ENCODE measurements at regions of chr9 and their contacts with region 1.

Region 1: DNA sequence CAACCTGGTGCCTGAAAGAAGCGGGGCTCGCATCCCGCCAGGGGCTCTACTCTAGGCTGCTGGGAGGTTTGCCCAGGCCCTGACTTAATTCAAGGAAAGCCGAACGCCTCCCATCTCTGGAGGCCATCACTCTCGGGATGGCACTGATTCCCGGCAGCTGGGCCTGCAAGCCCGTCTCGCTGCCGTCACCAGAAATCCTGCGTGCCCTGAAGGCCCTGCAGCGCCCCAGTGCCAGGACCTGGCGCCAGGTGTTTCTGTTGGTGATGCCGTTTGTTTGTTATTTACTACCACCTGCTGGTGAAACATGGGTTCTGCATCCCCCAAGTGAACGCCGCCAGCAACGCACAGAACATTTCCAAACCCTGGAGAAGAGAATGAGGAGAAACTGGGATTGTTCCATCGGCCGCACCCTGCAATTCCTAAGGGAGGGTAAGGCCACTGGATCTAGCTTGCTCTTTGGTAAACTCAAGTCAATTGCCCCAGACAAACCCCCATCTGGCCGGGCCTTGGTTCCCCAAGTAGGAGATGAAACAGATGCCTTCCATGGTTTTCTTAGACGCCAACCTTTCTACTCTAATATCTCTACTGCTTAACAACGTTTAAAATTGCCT is 77.9 kb downstream of the AK8 start:
- DNase-seq: peak; percentile 61 to 95 (median 88)
- ATAC-seq: peak; percentile 52 to 69
- H3K4me3 ChIP-seq: no peak overlapping the region
- H3K27ac ChIP-seq: no peak overlapping the region
- H3K4me1 ChIP-seq: peaks cover 9% of the 10 kb centered on the region
- H3K27me3 ChIP-seq: no peaks in the 10 kb centered on the region

Region 2: GRCh38 chr9:132411091-132411508 is 389.0 kb before region 1 on chr9:
- intact Hi-C with region 1: loop called in 3 of 4 experiments (anchors 5 to 10 kb)
- DNase-seq: peak; percentile 28 to 72 (median 72)
- ATAC-seq: peak; percentile 4 to 32
- H3K4me3 ChIP-seq: peak overlapping the region; percentile 89
- H3K27ac ChIP-seq: no peak overlapping the region
- H3K4me1 ChIP-seq: peaks cover 9% of the 10 kb centered on the region
- H3K27me3 ChIP-seq: no peaks in the 10 kb centered on the region

Region 3: GRCh38 chr9:132461971-132462370 is 338.2 kb before region 1 on chr9:
- intact Hi-C with region 1: no loop called
- DNase-seq: no peak
- ATAC-seq: no peak
- H3K4me3 ChIP-seq: no peak overlapping the region
- H3K27ac ChIP-seq: no peak overlapping the region
- H3K4me1 ChIP-seq: no peaks in the 10 kb centered on the region
- H3K27me3 ChIP-seq: no peaks in the 10 kb centered on the region

Region 4: DNA sequence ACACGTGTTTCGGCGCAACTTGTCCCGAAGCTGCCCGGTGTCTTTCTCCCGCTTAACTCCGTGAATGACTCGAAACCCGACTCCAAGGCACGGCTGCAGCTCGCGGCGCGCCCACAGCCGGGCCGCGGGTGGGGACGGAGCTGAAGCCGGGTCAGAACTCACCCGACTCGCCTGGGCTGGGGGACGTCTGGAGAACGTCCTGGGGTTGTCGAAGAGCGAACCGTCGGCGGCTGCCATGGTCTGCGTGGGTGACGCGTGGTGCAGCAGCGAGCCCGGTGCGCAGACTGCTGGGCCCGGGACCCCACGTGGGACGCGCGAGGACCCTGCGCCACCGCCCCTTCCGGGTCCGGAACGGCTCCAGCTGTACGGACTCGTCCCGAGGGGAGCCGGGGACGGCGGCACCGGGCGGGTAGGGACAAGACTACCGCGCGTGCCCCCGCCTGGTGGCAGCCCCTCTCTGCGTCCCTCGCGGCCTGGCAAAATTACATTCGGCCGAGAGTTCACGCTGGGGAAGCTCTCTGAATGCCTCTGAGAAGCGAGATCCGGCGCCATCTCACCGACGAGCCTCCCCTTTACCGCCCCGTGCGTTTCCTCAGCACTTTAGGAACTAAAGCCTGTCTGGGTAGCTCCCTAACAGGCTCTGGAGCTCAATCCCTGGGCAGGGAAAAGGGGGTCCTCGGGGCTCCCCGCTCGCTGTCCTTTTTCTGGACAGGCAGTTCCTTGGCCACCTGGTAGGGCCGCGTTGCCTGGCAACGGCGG is 130.3 kb before region 1 on chr9 and contains the start of gene DDX31:
- intact Hi-C with region 1: loop called in 1 of 4 experiments (anchors 10 kb)
- DNase-seq: peak; percentile 90 to 96 (median 95)
- ATAC-seq: peak; percentile 98 to 99
- H3K4me3 ChIP-seq: peak within 1 kb of the TSS; percentile 78
- H3K27ac ChIP-seq: peak within 1 kb of the TSS; percentile 90
- H3K4me1 ChIP-seq: no peaks in the 10 kb centered on the region
- H3K27me3 ChIP-seq: no peaks in the 10 kb centered on the region
- total RNA-seq, gene DDX31: 3.7 to 7.4 (median 5.2) TPM

Region 5: GRCh38 chr9:132694157-132694556 is 106.0 kb before region 1 on chr9:
- intact Hi-C with region 1: loop called in 1 of 4 experiments (anchors 10 kb)
- DNase-seq: no peak
- ATAC-seq: no peak
- H3K4me3 ChIP-seq: no peak overlapping the region
- H3K27ac ChIP-seq: no peak overlapping the region
- H3K4me1 ChIP-seq: no peaks in the 10 kb centered on the region
- H3K27me3 ChIP-seq: no peaks in the 10 kb centered on the region

Measured in right cardiac atrium (tissue), 5 donors.